ENCODE measurements at regions of chr2 and their contacts with region 1.

Region 1: GRCh38 chr2:33497221-33497650 is 20.8 kb downstream of the RASGRP3 start:
- DNase-seq: peak; percentile 65
- H3K4me3 Mint-ChIP-seq: no peak overlapping the region
- H3K27ac Mint-ChIP-seq: no peak overlapping the region
- H3K4me1 Mint-ChIP-seq: peaks cover 35% of the 10 kb centered on the region
- H3K27me3 Mint-ChIP-seq: no peaks in the 10 kb centered on the region

Region 2: GRCh38 chr2:33457556-33458247 is 39.5 kb before region 1 on chr2:
- intact Hi-C with region 1: no loop called
- DNase-seq: no peak
- H3K4me3 Mint-ChIP-seq: no peak overlapping the region
- H3K27ac Mint-ChIP-seq: no peak overlapping the region
- H3K4me1 Mint-ChIP-seq: no peaks in the 10 kb centered on the region
- H3K27me3 Mint-ChIP-seq: peaks cover 6% of the 10 kb centered on the region

Region 3: DNA sequence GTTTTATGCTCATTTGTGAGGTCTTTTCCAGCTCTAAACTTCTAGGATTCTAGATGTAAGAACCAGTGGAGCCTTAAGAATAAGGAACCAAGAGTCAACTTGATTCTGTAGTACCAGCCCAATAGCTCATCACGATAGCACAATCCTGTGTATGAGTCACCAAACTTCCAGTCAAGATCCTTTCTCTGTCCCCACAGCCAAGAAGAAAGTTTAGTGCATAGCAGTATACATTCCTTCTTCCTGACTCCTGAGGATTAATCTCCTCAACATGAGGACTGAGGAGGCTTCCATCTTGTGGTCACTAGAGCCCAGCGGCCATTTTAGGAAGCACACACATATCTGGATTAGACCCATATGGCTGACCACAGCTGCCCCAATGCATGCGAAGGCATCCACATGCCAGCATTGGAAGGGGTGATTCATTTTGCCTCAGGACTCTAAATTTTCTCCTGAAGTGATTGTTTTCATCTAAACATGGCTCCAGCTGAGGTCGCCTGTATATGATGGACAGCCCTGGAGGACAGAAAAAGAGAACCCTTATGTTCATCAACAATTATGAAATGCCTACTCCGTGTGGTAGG is 32.6 kb after region 1 on chr2:
- intact Hi-C with region 1: loop called (anchors 2 kb)
- DNase-seq: no peak
- H3K4me3 Mint-ChIP-seq: no peak overlapping the region
- H3K27ac Mint-ChIP-seq: no peak overlapping the region
- H3K4me1 Mint-ChIP-seq: peaks cover 22% of the 10 kb centered on the region
- H3K27me3 Mint-ChIP-seq: no peaks in the 10 kb centered on the region

Region 4: GRCh38 chr2:33735096-33735495 is 237.9 kb after region 1 on chr2:
- intact Hi-C with region 1: no loop called
- DNase-seq: no peak
- H3K4me3 Mint-ChIP-seq: no peak overlapping the region
- H3K27ac Mint-ChIP-seq: no peak overlapping the region
- H3K4me1 Mint-ChIP-seq: no peaks in the 10 kb centered on the region
- H3K27me3 Mint-ChIP-seq: no peaks in the 10 kb centered on the region